Activated CD4-positive, alpha-beta memory T cell treated with anti-CD3 and anti-CD28 coated beads for 36 hours (primary cell): ENCODE measurements at regions of chr17 and their contacts with region 1.

Region 1: DNA sequence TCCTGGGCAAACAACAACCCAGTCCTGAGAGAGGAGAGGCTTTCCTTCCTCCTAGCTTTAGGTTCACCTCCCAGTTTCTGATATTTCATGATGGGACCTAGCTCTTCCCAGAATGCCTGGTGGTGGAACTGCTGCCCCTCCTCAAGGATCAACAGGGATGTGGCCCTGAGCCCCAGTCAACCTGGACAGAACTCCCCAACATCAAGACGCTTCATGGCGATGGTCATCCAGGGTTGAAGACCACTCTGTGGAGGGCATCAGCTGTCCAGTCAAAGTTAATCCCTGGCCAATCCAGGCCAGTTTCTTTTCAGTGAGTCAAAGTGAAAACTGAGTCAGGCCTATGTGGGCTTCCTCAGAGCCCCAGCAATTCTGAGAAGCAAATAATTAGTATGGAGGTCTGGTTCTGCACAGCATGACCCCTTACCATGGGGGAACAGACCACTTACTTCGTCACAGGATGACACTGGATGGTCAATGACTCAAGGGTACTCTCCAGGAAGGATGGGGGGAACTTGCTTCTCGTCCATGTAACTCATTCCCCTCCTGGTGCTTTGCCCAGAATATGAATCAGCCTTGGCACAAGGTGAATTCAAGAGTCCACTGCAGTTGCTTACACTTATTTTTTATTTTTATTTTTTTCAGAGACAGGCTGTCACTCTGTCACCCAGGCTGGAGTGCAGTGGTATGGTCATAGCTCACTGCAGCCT is 14.7 kb upstream of the XYLT2 start:
- DNase-seq: peak; percentile 63
- H3K4me3 Mint-ChIP-seq: no peak overlapping the region
- H3K27ac Mint-ChIP-seq: peak overlapping the region; percentile 74
- H3K4me1 Mint-ChIP-seq: peaks cover 24% of the 10 kb centered on the region
- H3K27me3 Mint-ChIP-seq: peaks cover 9% of the 10 kb centered on the region

Region 2: GRCh38 chr17:50213026-50214022 is 117.9 kb before region 1 on chr17:
- CTCF ChIA-PET with region 1: no interaction called
- POLR2A ChIA-PET with region 1: no interaction called
- intact Hi-C with region 1: loop called (anchors 5 kb)
- DNase-seq: peak; percentile 85
- H3K4me3 Mint-ChIP-seq: no peak overlapping the region
- H3K27ac Mint-ChIP-seq: no peak overlapping the region
- H3K4me1 Mint-ChIP-seq: peaks cover 18% of the 10 kb centered on the region
- H3K27me3 Mint-ChIP-seq: peaks cover 13% of the 10 kb centered on the region

Region 3: DNA sequence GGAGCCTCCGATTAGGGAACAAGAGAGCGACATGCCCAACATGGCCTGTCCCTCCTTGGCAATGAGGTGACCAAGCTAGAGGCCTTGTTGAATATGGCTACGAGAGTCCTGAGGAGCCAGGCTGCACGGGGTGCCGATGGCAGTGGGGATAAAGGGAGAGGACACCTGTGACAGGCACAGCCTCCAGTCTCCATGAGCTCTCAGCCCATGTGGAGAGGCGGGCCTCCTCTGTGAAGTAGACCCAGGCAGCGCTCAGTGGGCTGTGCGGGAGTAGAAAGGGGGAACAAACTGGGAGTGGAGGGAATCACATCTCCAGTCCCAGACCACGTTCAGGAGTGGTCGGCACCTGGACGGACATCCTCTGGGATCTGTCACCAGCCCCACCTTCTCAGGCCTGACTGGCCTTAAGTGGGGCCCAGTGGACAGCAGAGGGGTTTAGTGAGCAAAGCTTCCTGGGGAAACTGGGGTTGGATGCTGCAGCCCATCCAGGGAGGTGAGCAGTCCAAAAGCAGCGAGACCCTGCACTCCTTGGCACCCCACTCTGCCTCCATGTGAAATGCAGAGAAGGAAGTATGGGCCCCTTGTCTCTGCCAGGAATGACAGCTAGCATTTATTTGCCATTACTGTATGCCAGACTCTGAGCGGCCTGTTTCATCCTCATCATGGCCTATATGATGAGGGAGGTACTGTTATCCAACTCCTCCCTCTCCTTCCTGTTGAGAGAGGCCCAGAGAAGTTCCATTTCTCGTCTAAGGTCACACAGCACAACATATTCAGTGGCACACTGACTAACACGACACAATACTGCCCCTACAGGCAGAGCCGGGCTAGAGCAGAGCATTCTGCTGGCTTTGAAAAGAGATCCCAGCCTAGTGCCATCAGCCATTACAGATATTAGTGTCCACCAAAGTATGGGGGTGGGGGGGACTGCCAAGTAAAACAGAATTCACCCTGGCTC is 61.5 kb before region 1 on chr17:
- CTCF ChIA-PET with region 1: no interaction called
- POLR2A ChIA-PET with region 1: no interaction called
- intact Hi-C with region 1: loop called (anchors 5 kb)
- DNase-seq: peak; percentile 79
- H3K4me3 Mint-ChIP-seq: no peak overlapping the region
- H3K27ac Mint-ChIP-seq: no peak overlapping the region
- H3K4me1 Mint-ChIP-seq: peaks cover 5% of the 10 kb centered on the region
- H3K27me3 Mint-ChIP-seq: peaks cover 15% of the 10 kb centered on the region

Region 4: GRCh38 chr17:50289991-50290702 is 41.1 kb before region 1 on chr17:
- CTCF ChIA-PET with region 1: no interaction called
- POLR2A ChIA-PET with region 1: no interaction called
- intact Hi-C with region 1: loop called (anchors 5 kb)
- DNase-seq: peak; percentile 61
- H3K4me3 Mint-ChIP-seq: no peak overlapping the region
- H3K27ac Mint-ChIP-seq: peak overlapping the region; percentile 79
- H3K4me1 Mint-ChIP-seq: peaks cover 19% of the 10 kb centered on the region
- H3K27me3 Mint-ChIP-seq: peaks cover 19% of the 10 kb centered on the region

Region 5: GRCh38 chr17:50311112-50311460 is 20.2 kb before region 1 on chr17:
- CTCF ChIA-PET with region 1: interaction called, 4 read pairs
- POLR2A ChIA-PET with region 1: no interaction called
- intact Hi-C with region 1: loop called (anchors 1 kb)
- DNase-seq: peak; percentile 36
- H3K4me3 Mint-ChIP-seq: no peak overlapping the region
- H3K27ac Mint-ChIP-seq: peak overlapping the region; percentile 85
- H3K4me1 Mint-ChIP-seq: peaks cover 39% of the 10 kb centered on the region
- H3K27me3 Mint-ChIP-seq: peaks cover 13% of the 10 kb centered on the region

Region 6: GRCh38 chr17:50689251-50689650 is 358.0 kb after region 1 on chr17:
- CTCF ChIA-PET with region 1: no interaction called
- POLR2A ChIA-PET with region 1: no interaction called
- intact Hi-C with region 1: no loop called
- DNase-seq: no peak
- H3K4me3 Mint-ChIP-seq: no peak overlapping the region
- H3K27ac Mint-ChIP-seq: no peak overlapping the region
- H3K4me1 Mint-ChIP-seq: no peaks in the 10 kb centered on the region
- H3K27me3 Mint-ChIP-seq: no peaks in the 10 kb centered on the region